ENCODE measurements at regions of chr4 and their contacts with region 1.

Region 1: GRCh38 chr4:111666826-111667360 is 478.4 kb upstream of the FAM241A start:
- DNase-seq: peak; percentile 9
- H3K4me3 ChIP-seq: no peak overlapping the region
- H3K27me3 ChIP-seq: no peaks in the 10 kb centered on the region
- CTCF ChIP-seq: no peak

Region 2: GRCh38 chr4:111678479-111678878 is 11.6 kb after region 1 on chr4:
- CTCF ChIA-PET with region 1: interaction called, 3 read pairs
- POLR2A ChIA-PET with region 1: interaction called, 16 read pairs
- DNase-seq: peak; percentile 96
- H3K4me3 ChIP-seq: no peak overlapping the region
- H3K27me3 ChIP-seq: no peaks in the 10 kb centered on the region
- CTCF ChIP-seq: no peak

Region 3: GRCh38 chr4:112677519-112678091 is 1010.7 kb after region 1 on chr4:
- CTCF ChIA-PET with region 1: no interaction called
- POLR2A ChIA-PET with region 1: no interaction called
- DNase-seq: no peak
- H3K4me3 ChIP-seq: no peak overlapping the region
- H3K27me3 ChIP-seq: 0 out of 2 replicates have a peak, but pooled peaks cover 1% of the 10 kb centered on the region
- CTCF ChIP-seq: no peak

Measured in BJ (cell line).